GM13976 (cell line): ENCODE measurements at regions of chr7 and their contacts with region 1.

Region 1: DNA sequence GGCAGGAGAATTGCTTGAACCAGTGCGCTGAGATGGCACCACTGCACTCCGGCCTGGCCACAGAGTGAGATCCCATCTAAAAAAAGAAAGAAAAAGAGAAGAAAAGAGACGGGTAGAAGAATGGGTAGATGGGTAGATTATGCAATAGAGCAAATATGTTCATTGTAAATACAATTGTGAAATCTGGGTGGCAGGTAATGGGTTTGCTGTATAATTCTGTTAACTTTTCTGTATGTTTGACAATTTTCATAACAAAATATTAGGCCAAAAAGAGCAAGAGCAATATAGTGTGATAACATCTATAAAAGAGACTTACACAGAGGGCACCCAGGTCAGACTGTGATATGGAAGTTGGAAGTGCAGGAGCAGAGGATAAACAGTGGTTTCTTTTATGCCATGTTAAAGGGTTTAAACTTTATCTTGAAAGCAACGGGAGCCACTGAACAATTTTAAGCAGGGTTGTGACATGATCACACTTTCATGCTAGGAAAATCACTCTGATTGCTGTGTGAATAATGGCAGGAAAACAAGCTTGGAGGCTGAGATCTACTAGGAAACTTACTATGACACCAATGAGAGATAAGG is 6.7 kb upstream of the COL28A1 start:
- DNase-seq: no peak
- CTCF ChIP-seq: no peak

Region 2: DNA sequence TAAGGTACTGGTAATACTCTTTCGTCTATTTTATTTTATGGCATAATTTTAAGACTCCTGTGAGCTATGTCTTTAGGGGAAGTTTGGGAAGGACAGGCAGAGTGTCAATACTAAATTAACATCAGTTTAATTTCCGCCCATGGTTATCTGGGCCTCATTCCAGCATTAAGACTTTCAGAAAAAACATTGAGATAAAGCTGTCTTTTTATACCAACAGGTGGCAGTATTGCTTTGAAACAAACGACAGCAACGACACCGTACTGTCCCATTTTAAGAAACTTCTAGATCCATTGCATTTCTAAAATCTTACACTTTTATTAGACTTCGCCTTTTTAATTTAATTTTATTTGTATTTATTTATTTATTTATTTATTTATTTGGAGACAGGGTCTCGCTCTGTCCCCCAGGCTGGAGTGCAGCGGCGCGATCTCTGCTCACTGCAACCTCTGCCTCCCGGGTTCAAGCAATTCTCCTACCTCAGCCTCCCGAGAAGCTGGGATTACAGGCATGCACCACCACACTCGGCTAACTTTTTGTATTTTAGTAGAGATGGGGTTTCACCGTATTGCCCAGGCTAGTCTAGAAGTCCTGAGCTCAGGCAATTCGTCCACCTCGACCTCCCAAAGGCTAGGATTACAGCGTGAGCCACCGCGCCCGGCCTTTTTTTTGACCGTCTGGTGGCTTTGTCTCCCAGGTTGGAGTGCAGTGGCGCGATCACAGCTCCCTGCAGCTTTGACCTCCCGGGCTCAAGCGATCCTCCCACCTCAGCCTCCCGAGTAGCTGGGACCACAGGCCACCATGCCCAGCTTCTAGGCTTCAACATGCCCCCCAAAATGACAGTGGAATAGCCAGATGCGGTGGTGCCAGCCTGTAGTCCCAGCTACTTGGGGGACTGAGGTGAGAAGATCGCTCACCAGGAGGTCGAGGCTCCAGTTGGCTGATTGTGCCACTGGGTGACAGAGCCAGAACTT is 438.7 kb before region 1 on chr7:
- in situ Hi-C with region 1: loop called (anchors 5 kb)
- DNase-seq: peak; percentile 76
- CTCF ChIP-seq: peak; percentile 39

Region 3: DNA sequence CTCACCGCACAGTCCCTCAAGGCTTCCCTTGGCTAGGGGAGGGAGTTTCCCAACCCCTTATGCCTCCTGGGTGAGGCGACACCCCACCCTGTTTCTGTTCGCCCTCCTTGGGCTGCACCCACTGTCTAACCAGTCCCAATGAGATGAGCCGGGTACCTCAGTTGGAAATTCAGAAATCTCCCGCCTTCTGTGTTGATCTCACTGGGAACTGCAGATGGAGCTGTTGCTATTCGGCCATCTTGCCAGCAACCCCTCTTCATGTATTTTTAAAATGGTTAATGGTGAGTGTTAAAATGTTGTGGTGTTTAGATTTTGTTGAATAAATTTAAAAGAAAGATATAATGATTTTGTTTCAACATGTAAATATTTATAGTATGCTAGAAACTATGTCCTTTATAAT is 120.2 kb after region 1 on chr7:
- in situ Hi-C with region 1: no loop called
- DNase-seq: no peak
- CTCF ChIP-seq: no peak

Region 4: DNA sequence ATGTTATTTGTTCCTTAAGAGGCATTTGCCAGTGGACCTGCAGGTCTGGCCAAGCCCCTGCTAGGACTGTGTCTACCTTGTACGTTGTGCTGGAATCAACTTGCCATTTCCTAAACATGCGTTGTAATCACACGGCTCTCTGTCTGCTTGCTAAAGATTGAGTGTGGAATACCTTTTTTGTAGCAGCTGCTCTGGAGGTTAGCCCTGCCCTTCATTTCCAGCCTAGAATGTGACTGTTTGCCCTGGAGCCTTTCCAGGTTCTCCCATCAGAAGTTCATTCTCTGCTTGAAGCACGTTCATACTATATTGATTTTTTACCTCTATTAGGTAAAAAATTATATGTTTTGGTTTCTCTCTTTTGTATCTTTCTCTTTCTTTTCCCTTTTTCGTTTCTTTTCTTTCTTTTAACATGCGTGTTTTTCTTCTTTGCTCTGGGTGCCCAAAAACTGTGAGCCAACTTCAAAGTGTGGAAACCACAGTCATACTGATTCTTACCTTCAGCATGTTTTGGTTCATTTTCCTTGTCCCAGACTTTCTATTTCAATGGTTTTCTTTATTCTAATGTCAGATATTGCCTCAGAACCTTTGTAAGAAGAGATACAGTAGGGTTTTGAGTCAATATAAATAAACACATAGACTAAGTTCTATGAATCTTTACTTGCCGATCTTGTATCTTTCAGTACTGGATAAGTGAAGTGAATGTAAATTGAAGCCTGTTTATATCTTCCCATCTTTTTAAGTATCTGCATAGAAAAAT is 288.0 kb after region 1 on chr7:
- in situ Hi-C with region 1: no loop called
- DNase-seq: no peak
- CTCF ChIP-seq: no peak

Region 5: GRCh38 chr7:8042796-8043535 is 500.6 kb after region 1 on chr7:
- in situ Hi-C with region 1: no loop called
- DNase-seq: no peak
- CTCF ChIP-seq: no peak

Region 6: DNA sequence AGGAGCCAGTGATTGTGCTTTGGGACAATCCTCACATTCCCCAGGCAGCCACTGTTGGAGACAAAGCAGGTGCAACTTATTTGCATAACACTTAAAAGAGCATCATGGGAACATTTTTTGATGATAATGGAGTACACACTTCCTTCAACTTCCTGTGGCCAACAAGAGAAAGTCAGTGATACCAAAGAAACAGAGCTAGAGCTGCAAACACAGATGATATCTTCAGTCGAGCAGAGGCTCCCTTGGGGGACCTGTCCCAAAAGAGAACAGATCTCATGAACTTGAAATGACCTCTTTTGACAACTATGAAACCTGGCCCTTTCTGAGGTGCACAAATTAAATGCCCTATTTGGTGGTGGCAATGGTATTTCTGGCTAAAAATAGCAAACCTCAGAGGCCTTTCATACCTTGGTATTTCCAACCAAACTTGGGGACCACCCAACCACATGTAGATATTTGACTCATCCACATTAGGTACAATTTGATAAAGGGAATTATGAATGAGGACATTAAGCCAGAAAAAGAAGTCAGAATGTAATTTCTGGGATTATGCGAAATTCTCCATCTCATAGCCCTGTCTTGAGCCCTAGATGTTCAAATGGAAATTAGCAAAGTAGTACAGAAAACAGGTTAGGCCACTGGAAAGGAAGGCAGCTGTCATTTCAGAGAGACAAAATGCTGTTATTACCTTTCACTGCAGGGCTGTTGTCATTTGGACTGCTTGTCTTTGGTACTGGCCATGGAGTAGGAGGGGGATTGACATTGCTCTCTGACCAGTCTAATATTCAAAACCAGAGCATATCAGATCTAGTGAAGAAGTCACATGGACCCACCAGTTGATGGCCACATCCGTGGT is 573.4 kb after region 1 on chr7:
- in situ Hi-C with region 1: no loop called
- DNase-seq: peak; percentile 63
- CTCF ChIP-seq: no peak